Dendritic cell treated with granulocyte-macrophage colony-stimulating factor and Interleukin-4, amounts not matched to agents 40 ng/mL and 50 ng/mL, for 4 days (primary cell): ENCODE measurements at regions of chr19 and their contacts with region 1.

Region 1: GRCh38 chr19:35013031-35013819 is 13.1 kb downstream of the GRAMD1A start:
- H3K4me3 Mint-ChIP-seq: peak overlapping the region; percentile 30
- H3K27ac Mint-ChIP-seq: peak overlapping the region; percentile 66
- H3K4me1 Mint-ChIP-seq: peaks cover 71% of the 10 kb centered on the region
- H3K27me3 Mint-ChIP-seq: no peaks in the 10 kb centered on the region

Region 2: DNA sequence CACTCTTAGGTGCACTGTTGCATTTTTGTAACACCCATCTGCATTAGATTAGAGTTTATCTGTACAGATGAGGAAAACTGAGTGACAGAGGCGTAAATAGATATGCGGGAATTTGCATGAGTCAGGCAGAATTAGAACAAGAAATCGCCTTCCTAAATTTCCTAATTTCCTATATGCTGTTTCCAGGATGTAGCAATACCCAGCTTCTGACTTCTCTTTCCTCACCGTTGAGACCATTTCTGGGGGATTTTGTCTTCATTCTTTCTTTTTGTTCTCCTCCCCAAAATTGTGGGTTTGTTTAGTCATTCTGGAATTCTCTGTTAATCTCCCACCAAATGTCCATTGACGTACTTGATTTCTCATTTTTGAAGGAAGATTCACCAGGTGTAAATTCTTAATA is 38.6 kb before region 1 on chr19:
- intact Hi-C with region 1: loop called (anchors 1 kb)
- H3K4me3 Mint-ChIP-seq: no peak overlapping the region
- H3K27ac Mint-ChIP-seq: no peak overlapping the region
- H3K4me1 Mint-ChIP-seq: peaks cover 39% of the 10 kb centered on the region
- H3K27me3 Mint-ChIP-seq: no peaks in the 10 kb centered on the region